ENCODE measurements at regions of chr13 and their contacts with region 1.

Region 1: DNA sequence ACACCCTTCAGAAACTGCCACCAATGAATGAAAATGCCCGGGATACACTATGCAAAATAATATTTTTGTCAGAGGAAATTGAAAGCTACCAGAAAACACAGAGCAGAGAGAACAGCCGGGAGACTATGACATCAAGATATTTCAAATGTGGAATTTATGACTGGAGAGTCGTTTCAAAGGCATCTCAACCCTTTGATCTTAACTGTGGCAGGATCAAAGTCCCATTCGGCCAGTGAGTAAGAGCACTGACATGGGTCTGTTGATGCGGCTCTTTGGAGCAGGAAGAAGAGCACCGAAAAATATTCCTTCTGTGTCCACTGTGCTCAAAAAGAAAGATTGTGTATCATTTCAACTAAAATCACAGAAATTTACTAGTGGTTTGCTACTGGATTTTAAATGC is 201.9 kb downstream of the RFC3 start:
- DNase-seq: peak; percentile 99
- ATAC-seq: peak; percentile 100
- H3K4me3 ChIP-seq: peak overlapping the region in 2 of 3 experiments; percentile 18 to 35; a peak in 4 of 6 replicates
- H3K27ac ChIP-seq: peak overlapping the region; percentile 95
- H3K4me1 ChIP-seq: peaks cover 58% of the 10 kb centered on the region
- H3K27me3 ChIP-seq: no peaks in the 10 kb centered on the region
- CTCF ChIP-seq: no peak
- EP300 ChIP-seq: peak; percentile 68 to 93; a peak in 2 of 4 replicates
- POLR2A ChIP-seq: peak in 1 of 2 experiments; percentile 19; a peak in 1 of 4 replicates
- RAD21 ChIP-seq: no peak; the same call in 1 of the 2 replicates

Region 2: GRCh38 chr13:34037636-34038540 is 18.0 kb after region 1 on chr13:
- CTCF ChIA-PET with region 1: no interaction called
- POLR2A ChIA-PET with region 1: interaction called, 15 read pairs
- in situ Hi-C with region 1: no loop called
- intact Hi-C with region 1: no loop called
- DNase-seq: no peak
- ATAC-seq: peak; percentile 74
- H3K4me3 ChIP-seq: no peak overlapping the region; a peak in 1 of 6 replicates
- H3K27ac ChIP-seq: peak overlapping the region; percentile 60
- H3K4me1 ChIP-seq: peaks cover 54% of the 10 kb centered on the region
- H3K27me3 ChIP-seq: no peaks in the 10 kb centered on the region
- CTCF ChIP-seq: no peak
- EP300 ChIP-seq: no peak
- POLR2A ChIP-seq: no peak
- RAD21 ChIP-seq: no peak

Region 3: DNA sequence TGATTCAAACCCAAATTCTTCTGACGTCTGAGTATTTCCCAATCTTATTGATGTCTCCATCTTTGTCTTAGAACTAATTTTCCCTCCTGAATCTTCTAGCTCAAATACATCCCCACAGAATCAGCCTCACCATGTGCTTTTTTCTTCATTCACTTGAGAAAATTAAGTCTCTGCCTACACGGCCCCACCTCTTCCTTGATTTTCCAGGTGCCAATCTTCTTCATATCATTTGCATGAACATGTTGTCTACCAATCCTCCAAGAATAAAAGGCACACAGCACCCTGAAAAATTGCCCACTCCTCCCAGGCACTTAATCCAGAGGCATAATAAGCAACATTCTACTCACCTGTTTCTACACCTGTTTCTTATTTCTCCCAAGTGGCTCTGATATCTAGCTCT is 514.1 kb after region 1 on chr13:
- CTCF ChIA-PET with region 1: no interaction called
- POLR2A ChIA-PET with region 1: no interaction called
- in situ Hi-C with region 1: no loop called
- intact Hi-C with region 1: no loop called
- DNase-seq: no peak
- ATAC-seq: no peak
- H3K4me3 ChIP-seq: no peak overlapping the region
- H3K27ac ChIP-seq: no peak overlapping the region
- H3K4me1 ChIP-seq: no peaks in the 10 kb centered on the region
- H3K27me3 ChIP-seq: no peaks in the 10 kb centered on the region
- CTCF ChIP-seq: no peak
- EP300 ChIP-seq: no peak
- POLR2A ChIP-seq: no peak
- RAD21 ChIP-seq: no peak